ENCODE measurements at regions of chr6 and their contacts with region 1.

Region 1: DNA sequence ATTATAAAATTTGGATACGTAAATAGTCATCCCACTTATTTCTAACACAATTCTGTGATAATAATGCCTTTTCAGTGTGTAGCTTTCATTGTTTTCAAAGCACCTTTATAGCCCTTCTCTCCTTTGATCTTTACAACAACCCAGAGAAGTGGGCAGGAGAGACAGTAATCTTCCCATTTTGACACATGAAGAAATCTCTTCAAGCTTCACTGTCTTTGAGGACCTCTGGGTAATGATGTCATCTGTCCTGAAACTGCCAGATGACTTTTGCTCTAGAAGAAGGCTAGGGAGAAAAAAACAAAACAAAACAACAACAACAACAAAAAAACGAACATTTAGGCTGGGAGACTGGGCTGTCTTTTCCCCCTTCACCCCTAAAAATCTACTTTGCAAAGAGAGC is 203.0 kb downstream of the KCNQ5 start:
- DNase-seq: no peak
- ATAC-seq: peak in 1 of 4 donors; percentile 35
- H3K4me3 ChIP-seq: no peak overlapping the region
- H3K27ac ChIP-seq: peak overlapping the region; percentile 64
- H3K4me1 ChIP-seq: peaks cover 75% of the 10 kb centered on the region
- H3K27me3 ChIP-seq: no peaks in the 10 kb centered on the region
- CTCF ChIP-seq: no peak

Region 2: GRCh38 chr6:72950114-72950860 is 125.5 kb after region 1 on chr6:
- intact Hi-C with region 1: loop called in 1 of 2 experiments (anchors 5 kb)
- DNase-seq: peak in 1 of 2 donors; percentile 50
- ATAC-seq: peak; percentile 83 to 89 (median 86)
- H3K4me3 ChIP-seq: peak overlapping the region; percentile 19
- H3K27ac ChIP-seq: peak overlapping the region; percentile 92
- H3K4me1 ChIP-seq: peaks cover 77% of the 10 kb centered on the region
- H3K27me3 ChIP-seq: no peaks in the 10 kb centered on the region
- CTCF ChIP-seq: no peak